G401 (cell line): ENCODE measurements at regions of chr19 and their contacts with region 1.

Region 1: DNA sequence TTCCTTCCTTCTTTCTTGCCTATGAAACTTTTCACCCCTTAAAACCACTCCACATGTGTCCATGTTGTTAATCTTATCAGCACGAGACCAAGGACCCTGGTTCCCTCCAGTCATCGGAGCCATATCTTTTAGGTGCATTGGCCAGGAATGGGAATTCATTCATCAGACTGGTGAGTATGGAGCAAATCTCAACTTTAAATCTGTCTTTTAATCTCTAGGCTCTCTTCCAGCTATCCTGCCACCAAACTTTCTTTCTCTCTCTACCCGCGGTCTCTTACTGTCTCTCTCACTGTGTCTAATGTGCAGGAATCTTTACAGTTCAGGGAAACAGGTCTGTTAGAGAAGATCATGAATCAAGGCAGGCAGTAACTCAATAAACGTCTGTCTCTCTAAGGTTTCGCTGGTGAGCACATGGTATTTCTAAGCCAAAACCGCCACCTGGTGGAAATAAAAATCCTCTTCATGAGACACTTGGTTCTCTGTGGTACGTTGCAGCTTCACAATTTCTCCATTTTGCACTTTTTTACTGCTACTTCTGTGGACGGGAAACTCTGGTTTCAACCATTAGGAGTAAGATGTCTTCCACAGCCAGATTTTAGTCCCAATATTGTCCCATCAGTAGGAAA is 16.1 kb downstream of the LGALS16 start:
- DNase-seq: peak; percentile 41

Region 2: DNA sequence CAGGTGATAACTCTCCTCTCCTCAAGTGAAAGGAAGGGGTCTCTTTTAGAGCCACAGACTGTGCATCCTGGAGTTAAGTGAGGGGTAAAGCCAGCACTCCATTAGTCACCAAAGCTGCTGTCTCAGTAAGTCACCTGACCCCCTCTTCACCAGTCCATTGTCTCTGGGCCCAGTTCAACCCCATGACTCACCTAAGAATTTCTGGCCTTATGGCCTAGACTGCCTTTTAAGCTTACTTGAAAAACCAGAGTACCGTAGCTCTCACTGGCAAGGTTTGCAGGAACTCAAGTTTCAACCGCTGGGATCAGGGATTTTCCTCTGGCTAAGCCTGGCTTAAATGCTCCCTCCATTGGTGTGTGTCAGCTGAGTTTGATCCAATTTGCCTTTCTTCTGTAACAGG is 108.4 kb before region 1 on chr19:
- in situ Hi-C with region 1: loop called (anchors 10 kb)
- DNase-seq: no peak